ENCODE measurements at regions of chr15 and their contacts with region 1.

Region 1: DNA sequence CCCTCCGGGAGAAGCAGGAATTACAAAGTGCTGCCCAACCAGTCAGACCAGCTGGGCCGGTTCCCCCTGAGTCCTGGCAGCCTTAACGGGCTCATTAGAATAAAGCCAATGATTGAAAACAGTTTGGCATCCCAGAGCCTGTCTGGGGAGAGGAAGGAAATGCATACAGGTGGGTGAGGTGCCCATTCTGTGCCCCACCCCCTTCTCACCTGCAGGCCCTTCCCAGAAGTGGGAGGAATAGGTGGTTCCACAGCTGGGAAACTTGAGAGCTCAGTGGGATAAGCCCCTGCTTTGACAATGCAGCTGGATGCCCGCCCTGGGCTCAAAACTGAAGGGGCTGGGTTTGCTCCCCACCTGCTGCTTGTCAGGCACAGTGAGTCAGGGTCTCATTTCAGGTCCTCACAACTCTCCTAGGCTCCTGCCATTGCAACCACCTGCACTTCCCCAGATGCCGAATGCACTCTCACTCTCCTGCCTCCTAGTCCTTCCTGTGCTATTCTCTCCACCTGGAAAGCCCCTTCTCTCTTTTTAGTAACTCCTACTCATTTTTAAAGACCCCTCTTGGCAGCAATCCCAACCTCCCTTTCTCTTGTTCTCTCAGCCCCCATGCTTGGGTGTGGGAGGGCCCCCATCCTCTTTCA is 5.5 kb upstream of the BUB1B start:
- DNase-seq: no peak
- ATAC-seq: no peak
- H3K4me3 ChIP-seq: no peak overlapping the region
- H3K27ac ChIP-seq: no peak overlapping the region
- H3K4me1 ChIP-seq: peaks cover 15 to 16% of the 10 kb centered on the region in 2 donors
- H3K27me3 ChIP-seq: no peaks in the 10 kb centered on the region
- CTCF ChIP-seq: no peak
- POLR2A ChIP-seq: no peak

Region 2: GRCh38 chr15:40115670-40116093 is 39.7 kb before region 1 on chr15:
- in situ Hi-C with region 1: loop called in 1 of 4 experiments (anchors 5 kb)
- intact Hi-C with region 1: no loop called
- DNase-seq: peak in 1 of 2 donors; percentile 54
- ATAC-seq: peak in 1 of 2 donors; percentile 58
- H3K4me3 ChIP-seq: no peak overlapping the region
- H3K27ac ChIP-seq: no peak overlapping the region
- H3K4me1 ChIP-seq: no peaks in the 10 kb centered on the region
- H3K27me3 ChIP-seq: no peaks in the 10 kb centered on the region
- CTCF ChIP-seq: no peak
- POLR2A ChIP-seq: no peak